ENCODE measurements at regions of chr15 and their contacts with region 1.

Region 1: DNA sequence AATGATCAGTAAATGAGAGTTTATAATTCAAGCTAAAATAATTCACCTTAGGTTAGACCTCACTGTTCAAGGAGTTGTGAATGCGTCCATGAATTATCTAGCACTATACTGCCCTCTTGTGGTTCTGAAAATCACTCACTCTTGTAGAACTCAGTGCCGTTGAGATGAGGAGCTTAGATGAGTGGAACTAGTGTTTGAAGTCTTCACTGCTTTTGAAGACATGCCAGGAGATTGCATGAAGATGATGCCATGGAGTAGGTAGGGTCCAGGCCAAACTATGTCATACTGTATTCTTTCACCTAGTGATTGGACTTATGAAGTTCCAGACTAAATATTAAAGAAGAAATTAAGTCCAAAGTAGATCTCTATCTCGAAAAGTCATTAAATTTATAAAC is 28.8 kb downstream of the LYSMD4 start:
- DNase-seq: peak in 4 of 9 experiments; percentile 19 to 85 (median 58)
- ATAC-seq: peak; percentile 74
- H3K4me3 ChIP-seq: no peak overlapping the region
- H3K4me3 Mint-ChIP-seq: no peak overlapping the region
- H3K27ac ChIP-seq: no peak overlapping the region
- H3K27ac Mint-ChIP-seq: no peak overlapping the region
- H3K4me1 ChIP-seq: peaks cover 38% of the 10 kb centered on the region
- H3K4me1 Mint-ChIP-seq: peaks cover 51% of the 10 kb centered on the region
- H3K27me3 ChIP-seq: no peaks in the 10 kb centered on the region
- H3K27me3 Mint-ChIP-seq: no peaks in the 10 kb centered on the region
- CTCF ChIP-seq: peak; percentile 63

Region 2: DNA sequence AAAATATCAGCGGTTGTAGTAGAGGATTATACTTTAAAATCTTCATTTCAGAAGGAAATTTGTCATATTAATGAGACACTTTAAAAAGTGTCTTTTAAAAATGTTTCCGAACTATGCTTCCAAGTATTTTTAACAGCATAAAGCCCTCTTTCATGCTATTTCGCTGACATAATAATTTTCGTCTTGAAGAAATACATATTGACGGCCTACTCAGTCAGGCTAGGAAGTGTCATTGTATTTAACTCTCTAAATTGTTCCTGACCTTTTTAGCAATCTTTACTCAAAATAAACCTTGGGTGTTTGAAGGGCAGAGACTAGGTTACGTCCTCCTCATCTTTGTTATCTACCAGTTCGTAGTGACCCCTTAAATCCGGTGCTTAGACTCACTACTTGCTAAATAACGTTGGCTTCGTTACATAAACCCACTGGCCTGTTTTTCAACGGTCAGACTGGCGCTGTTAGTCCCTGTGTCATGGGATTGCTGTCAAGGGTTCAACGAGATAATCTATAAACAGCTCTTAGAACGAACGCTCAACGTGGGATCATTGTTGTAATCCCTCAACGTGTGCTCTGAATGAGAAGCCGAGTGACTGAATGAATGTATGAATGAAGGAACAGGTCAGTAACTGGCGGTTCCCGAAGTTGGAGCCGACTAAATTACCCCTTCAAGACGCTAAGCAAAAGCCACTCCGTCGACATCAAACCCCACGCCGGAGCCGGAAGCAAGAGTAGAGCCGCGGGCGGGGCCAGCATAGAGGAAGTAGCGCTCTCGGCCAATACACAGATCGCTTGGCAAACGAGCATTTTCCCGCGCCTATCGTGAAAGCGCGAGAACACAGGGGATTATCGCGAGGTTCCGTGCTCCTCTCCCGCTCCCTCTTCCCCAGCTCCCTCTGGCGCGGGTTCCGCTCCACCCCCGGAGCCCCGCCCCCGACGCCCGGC is 453.7 kb before region 1 on chr15:
- CTCF ChIA-PET with region 1: interaction called, 10 read pairs
- POLR2A ChIA-PET with region 1: no interaction called
- intact Hi-C with region 1: no loop called
- DNase-seq: peak; percentile 83 to 98 (median 92)
- ATAC-seq: peak; percentile 95
- H3K4me3 ChIP-seq: peak overlapping the region; percentile 55 to 59
- H3K4me3 Mint-ChIP-seq: peak overlapping the region; percentile 90
- H3K27ac ChIP-seq: peak overlapping the region; percentile 25 to 79
- H3K27ac Mint-ChIP-seq: peak overlapping the region; percentile 89
- H3K4me1 ChIP-seq: peaks cover 19% of the 10 kb centered on the region
- H3K4me1 Mint-ChIP-seq: peaks cover 29% of the 10 kb centered on the region
- H3K27me3 ChIP-seq: no peaks in the 10 kb centered on the region
- H3K27me3 Mint-ChIP-seq: no peaks in the 10 kb centered on the region
- CTCF ChIP-seq: no peak

Region 3: GRCh38 chr15:99335508-99335907 is 368.9 kb before region 1 on chr15:
- CTCF ChIA-PET with region 1: interaction called, 24 read pairs
- POLR2A ChIA-PET with region 1: interaction called, 3 read pairs
- intact Hi-C with region 1: no loop called
- DNase-seq: no peak
- ATAC-seq: no peak
- H3K4me3 ChIP-seq: no peak overlapping the region
- H3K4me3 Mint-ChIP-seq: no peak overlapping the region
- H3K27ac ChIP-seq: no peak overlapping the region
- H3K27ac Mint-ChIP-seq: no peak overlapping the region
- H3K4me1 ChIP-seq: no peaks in the 10 kb centered on the region
- H3K4me1 Mint-ChIP-seq: no peaks in the 10 kb centered on the region
- H3K27me3 ChIP-seq: no peaks in the 10 kb centered on the region
- H3K27me3 Mint-ChIP-seq: no peaks in the 10 kb centered on the region
- CTCF ChIP-seq: no peak

Region 4: GRCh38 chr15:99565299-99566156 is 138.9 kb before region 1 on chr15 and contains the start of gene MEF2A:
- CTCF ChIA-PET with region 1: interaction called, 22 read pairs
- POLR2A ChIA-PET with region 1: interaction called, 5 read pairs
- intact Hi-C with region 1: no loop called
- DNase-seq: peak; percentile 81 to 96 (median 91)
- ATAC-seq: peak; percentile 66
- H3K4me3 ChIP-seq: peak within 1 kb of the TSS; percentile 74 to 91
- H3K4me3 Mint-ChIP-seq: peak within 1 kb of the TSS; percentile 96
- H3K27ac ChIP-seq: peak within 1 kb of the TSS; percentile 64 to 90
- H3K27ac Mint-ChIP-seq: peak within 1 kb of the TSS; percentile 96
- H3K4me1 ChIP-seq: peaks cover 40% of the 10 kb centered on the region
- H3K4me1 Mint-ChIP-seq: peaks cover 55% of the 10 kb centered on the region
- H3K27me3 ChIP-seq: no peaks in the 10 kb centered on the region
- H3K27me3 Mint-ChIP-seq: no peaks in the 10 kb centered on the region
- CTCF ChIP-seq: no peak
- total RNA-seq, gene MEF2A: 20.3 to 24.9 TPM

Region 5: DNA sequence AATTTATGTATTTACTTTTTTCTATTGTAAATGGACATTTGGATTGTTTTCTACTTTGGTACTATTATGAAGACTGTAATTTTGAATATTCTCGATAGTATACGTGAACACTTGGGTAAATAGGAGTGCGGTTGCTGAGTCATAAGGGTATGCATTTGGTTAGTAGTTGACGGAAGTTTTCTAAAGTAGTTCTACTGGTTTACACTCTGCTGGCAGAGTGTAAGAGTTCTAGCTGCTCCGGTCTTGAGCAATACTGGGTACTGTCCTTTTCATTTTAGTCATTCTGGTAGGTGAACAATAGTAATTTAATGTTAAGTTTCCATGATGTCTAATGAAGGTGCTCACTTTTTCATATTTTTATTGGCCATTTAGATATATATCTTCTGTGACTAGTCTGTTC is 68.6 kb before region 1 on chr15:
- CTCF ChIA-PET with region 1: no interaction called
- POLR2A ChIA-PET with region 1: no interaction called
- intact Hi-C with region 1: no loop called
- DNase-seq: no peak
- ATAC-seq: no peak
- H3K4me3 ChIP-seq: no peak overlapping the region
- H3K4me3 Mint-ChIP-seq: no peak overlapping the region
- H3K27ac ChIP-seq: no peak overlapping the region
- H3K27ac Mint-ChIP-seq: no peak overlapping the region
- H3K4me1 ChIP-seq: peaks cover 4% of the 10 kb centered on the region
- H3K4me1 Mint-ChIP-seq: peaks cover 34% of the 10 kb centered on the region
- H3K27me3 ChIP-seq: no peaks in the 10 kb centered on the region
- H3K27me3 Mint-ChIP-seq: no peaks in the 10 kb centered on the region
- CTCF ChIP-seq: no peak

Region 6: GRCh38 chr15:99692825-99693224 is 11.6 kb before region 1 on chr15:
- CTCF ChIA-PET with region 1: interaction called, 25 read pairs
- POLR2A ChIA-PET with region 1: interaction called, 3 read pairs
- intact Hi-C with region 1: no loop called
- DNase-seq: no peak
- ATAC-seq: no peak
- H3K4me3 ChIP-seq: no peak overlapping the region
- H3K4me3 Mint-ChIP-seq: no peak overlapping the region
- H3K27ac ChIP-seq: no peak overlapping the region
- H3K27ac Mint-ChIP-seq: no peak overlapping the region
- H3K4me1 ChIP-seq: no peaks in the 10 kb centered on the region
- H3K4me1 Mint-ChIP-seq: no peaks in the 10 kb centered on the region
- H3K27me3 ChIP-seq: no peaks in the 10 kb centered on the region
- H3K27me3 Mint-ChIP-seq: no peaks in the 10 kb centered on the region
- CTCF ChIP-seq: no peak

Region 7: GRCh38 chr15:99755692-99756409 is 51.4 kb after region 1 on chr15:
- CTCF ChIA-PET with region 1: interaction called, 42 read pairs
- POLR2A ChIA-PET with region 1: no interaction called
- intact Hi-C with region 1: loop called (anchors 1 to 2 kb)
- DNase-seq: peak; percentile 8 to 76 (median 24)
- ATAC-seq: peak; percentile 71
- H3K4me3 ChIP-seq: no peak overlapping the region
- H3K4me3 Mint-ChIP-seq: no peak overlapping the region
- H3K27ac ChIP-seq: no peak overlapping the region
- H3K27ac Mint-ChIP-seq: no peak overlapping the region
- H3K4me1 ChIP-seq: peaks cover 4% of the 10 kb centered on the region
- H3K4me1 Mint-ChIP-seq: peaks cover 3% of the 10 kb centered on the region
- H3K27me3 ChIP-seq: no peaks in the 10 kb centered on the region
- H3K27me3 Mint-ChIP-seq: no peaks in the 10 kb centered on the region
- CTCF ChIP-seq: peak; percentile 89

Measured in CD8-positive, alpha-beta T cell (primary cell).